Calu3 (cell line): ENCODE measurements at regions of chrX and their contacts with region 1.

Region 1: GRCh38 chrX:40735325-40736169 is at the start of gene MED14:
- DNase-seq: peak; percentile 92
- H3K4me3 Mint-ChIP-seq: peak within 1 kb of the TSS; percentile 82
- H3K27ac Mint-ChIP-seq: peak within 1 kb of the TSS; percentile 84
- H3K4me1 Mint-ChIP-seq: peaks cover 26% of the 10 kb centered on the region
- H3K27me3 Mint-ChIP-seq: no peaks in the 10 kb centered on the region
- CTCF ChIP-seq: no peak
- total RNA-seq, gene MED14: 53.1 and 57.4 TPM in 2 replicates

Region 2: GRCh38 chrX:40792433-40792832 is 56.9 kb after region 1 on chrX:
- CTCF ChIA-PET with region 1: interaction called, 11 read pairs
- intact Hi-C with region 1: loop called (anchors 5 kb)
- DNase-seq: no peak
- H3K4me3 Mint-ChIP-seq: no peak overlapping the region
- H3K27ac Mint-ChIP-seq: no peak overlapping the region
- H3K4me1 Mint-ChIP-seq: peaks cover 9% of the 10 kb centered on the region
- H3K27me3 Mint-ChIP-seq: peaks cover 8% of the 10 kb centered on the region
- CTCF ChIP-seq: no peak